ENCODE measurements at regions of chr3 and their contacts with region 1.

Region 1: GRCh38 chr3:27484015-27484844 is at the start of gene SLC4A7:
- DNase-seq: peak; percentile 97 to 99 (median 99)
- H3K4me3 ChIP-seq: peak within 1 kb of the TSS in 3 of 4 donors; percentile 57 to 98 (median 94)
- H3K27ac ChIP-seq: peak within 1 kb of the TSS; percentile 81 to 98 (median 91)
- H3K4me1 ChIP-seq: peaks cover 0 to 11% of the 10 kb centered on the region in 2 donors
- H3K27me3 ChIP-seq: no peaks in the 10 kb centered on the region
- CTCF ChIP-seq: peak in 1 of 6 experiments; percentile 6
- POLR2A ChIP-seq: peak; percentile 96 to 99
- total RNA-seq, gene SLC4A7: 5.7 to 34.5 (median 17.4) TPM

Region 2: GRCh38 chr3:27312044-27312668 is 172.1 kb before region 1 on chr3:
- intact Hi-C with region 1: loop called in 1 of 2 experiments (anchors 10 kb)
- DNase-seq: no peak
- H3K4me3 ChIP-seq: no peak overlapping the region
- H3K27ac ChIP-seq: no peak overlapping the region
- H3K4me1 ChIP-seq: peaks cover 0 to 3% of the 10 kb centered on the region in 2 donors
- H3K27me3 ChIP-seq: no peaks in the 10 kb centered on the region
- CTCF ChIP-seq: peak; percentile 66 to 80 (median 72)
- POLR2A ChIP-seq: no peak

Region 3: GRCh38 chr3:27326629-27327545 is 157.3 kb before region 1 on chr3:
- intact Hi-C with region 1: no loop called
- DNase-seq: peak in 4 of 7 donors; percentile 21 to 58 (median 42)
- H3K4me3 ChIP-seq: no peak overlapping the region
- H3K27ac ChIP-seq: no peak overlapping the region
- H3K4me1 ChIP-seq: no peaks in the 10 kb centered on the region
- H3K27me3 ChIP-seq: no peaks in the 10 kb centered on the region
- CTCF ChIP-seq: no peak
- POLR2A ChIP-seq: no peak

Region 4: DNA sequence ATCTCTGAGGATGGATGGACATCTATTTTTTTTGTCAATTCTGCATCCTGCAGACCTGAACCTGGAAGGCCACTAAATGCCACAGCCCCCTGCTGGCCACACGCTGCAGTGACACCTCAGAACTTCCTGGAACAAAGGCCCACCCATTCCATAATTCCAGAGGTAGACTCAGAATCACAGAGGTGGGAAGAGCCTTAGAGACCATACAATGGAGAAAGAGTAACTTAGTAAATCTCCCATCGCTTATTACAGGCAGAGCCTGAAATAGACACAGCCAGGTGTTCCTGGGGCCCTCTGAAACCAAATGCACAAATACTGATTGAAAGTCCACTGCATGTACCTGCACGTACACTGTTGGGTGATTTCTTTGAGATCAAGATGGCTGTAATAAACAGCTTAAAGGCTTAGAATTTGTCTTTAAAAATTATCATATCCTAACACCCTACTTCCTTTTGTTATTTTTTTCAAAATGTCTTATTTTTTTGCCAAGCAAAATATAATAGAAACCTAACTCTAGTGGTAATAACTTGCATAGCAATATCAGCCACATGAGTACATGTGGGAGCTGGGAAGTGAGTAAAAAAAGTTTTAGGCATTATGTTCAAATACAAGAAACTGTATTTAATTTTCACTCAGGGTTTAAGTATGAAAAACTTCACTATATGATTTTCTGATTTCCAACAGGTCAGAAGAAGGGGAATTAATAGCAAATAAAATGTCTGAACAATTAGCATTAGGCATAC is 175.2 kb after region 1 on chr3:
- intact Hi-C with region 1: loop called (anchors 10 kb)
- DNase-seq: peak; percentile 42 to 83 (median 69)
- H3K4me3 ChIP-seq: no peak overlapping the region
- H3K27ac ChIP-seq: no peak overlapping the region
- H3K4me1 ChIP-seq: no peaks in the 10 kb centered on the region
- H3K27me3 ChIP-seq: no peaks in the 10 kb centered on the region
- CTCF ChIP-seq: peak; percentile 72 to 83 (median 80)
- POLR2A ChIP-seq: no peak